ENCODE measurements at regions of chr1 and their contacts with region 1.

Region 1: GRCh38 chr1:27568300-27569087 is 35.5 kb downstream of the AHDC1 start:
- DNase-seq: peak; percentile 94
- ATAC-seq: peak; percentile 98
- H3K4me3 Mint-ChIP-seq: peak overlapping the region; percentile 64
- H3K27ac Mint-ChIP-seq: peak overlapping the region; percentile 46
- H3K4me1 Mint-ChIP-seq: peaks cover 29% of the 10 kb centered on the region
- H3K27me3 Mint-ChIP-seq: no peaks in the 10 kb centered on the region

Region 2: GRCh38 chr1:27581823-27582243 is 13.3 kb after region 1 on chr1:
- CTCF ChIA-PET with region 1: interaction called, 24 read pairs
- POLR2A ChIA-PET with region 1: no interaction called
- DNase-seq: no peak
- ATAC-seq: no peak
- H3K4me3 Mint-ChIP-seq: no peak overlapping the region
- H3K27ac Mint-ChIP-seq: peak overlapping the region; percentile 2
- H3K4me1 Mint-ChIP-seq: peaks cover 2% of the 10 kb centered on the region
- H3K27me3 Mint-ChIP-seq: peaks cover 1% of the 10 kb centered on the region